ENCODE measurements at regions of chr1 and their contacts with region 1.

Region 1: DNA sequence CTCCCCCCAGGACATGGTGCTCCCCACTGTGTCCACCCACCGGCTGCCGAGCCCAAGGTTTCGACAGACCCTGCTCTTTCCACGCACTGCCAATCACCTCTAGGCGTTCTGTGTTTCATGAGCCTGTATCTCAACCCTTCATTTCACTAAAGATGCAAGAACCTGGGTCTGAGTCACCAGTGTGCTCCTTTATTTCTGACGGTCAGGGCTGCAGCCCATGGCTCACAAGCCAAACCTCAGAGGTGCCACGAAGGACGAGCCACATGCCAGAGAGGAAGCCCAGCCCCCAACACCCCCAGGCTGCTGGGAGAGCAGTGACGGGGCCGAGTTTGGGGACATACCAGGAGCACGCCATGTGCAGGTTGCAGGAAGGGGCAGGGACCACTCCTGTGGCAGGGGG is 79.2 kb upstream of the ARHGEF16 start:
- DNase-seq: no peak
- ATAC-seq: no peak
- H3K4me3 ChIP-seq: no peak overlapping the region
- H3K27ac ChIP-seq: peak overlapping the region in 1 of 2 donors; percentile 93
- H3K4me1 ChIP-seq: peaks cover 2% of the 10 kb centered on the region in 2 donors
- H3K27me3 ChIP-seq: no peaks in the 10 kb centered on the region

Region 2: DNA sequence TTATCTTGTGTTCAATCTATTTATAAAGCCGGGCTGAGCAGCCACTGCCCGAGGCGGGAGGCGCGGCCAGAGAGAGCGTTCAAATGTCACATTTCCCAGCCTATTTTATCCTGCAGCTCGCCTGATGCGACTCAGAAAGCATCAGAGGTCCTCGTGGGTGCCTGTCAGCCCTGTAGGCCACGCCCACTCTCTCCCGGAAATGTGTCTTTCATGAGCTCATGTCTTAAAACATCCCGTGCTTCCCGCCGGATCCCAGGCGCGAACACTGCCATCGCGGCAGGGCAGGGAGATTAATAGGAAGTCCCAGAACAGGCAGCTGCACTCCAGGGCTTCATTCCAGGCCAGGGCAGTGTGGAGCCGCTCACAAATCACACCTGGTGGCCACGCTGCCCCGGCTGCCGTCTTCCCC is 188.7 kb before region 1 on chr1:
- intact Hi-C with region 1: no loop called
- DNase-seq: peak; percentile 95
- ATAC-seq: peak; percentile 83
- H3K4me3 ChIP-seq: no peak overlapping the region
- H3K27ac ChIP-seq: peak overlapping the region; percentile 85 to 89
- H3K4me1 ChIP-seq: no peaks in the 10 kb centered on the region
- H3K27me3 ChIP-seq: no peaks in the 10 kb centered on the region

Region 3: GRCh38 chr1:3393024-3393986 is 18.1 kb after region 1 on chr1:
- intact Hi-C with region 1: loop called in 1 of 2 experiments (anchors 2 kb)
- DNase-seq: no peak
- ATAC-seq: peak; percentile 42
- H3K4me3 ChIP-seq: no peak overlapping the region
- H3K27ac ChIP-seq: peak overlapping the region; percentile 80 to 97
- H3K4me1 ChIP-seq: peaks cover 0 to 3% of the 10 kb centered on the region in 2 donors
- H3K27me3 ChIP-seq: no peaks in the 10 kb centered on the region

Measured in aorta (tissue), 5 donors.